Ovary (tissue), 10 donors: ENCODE measurements at regions of chr12 and their contacts with region 1.

Region 1: DNA sequence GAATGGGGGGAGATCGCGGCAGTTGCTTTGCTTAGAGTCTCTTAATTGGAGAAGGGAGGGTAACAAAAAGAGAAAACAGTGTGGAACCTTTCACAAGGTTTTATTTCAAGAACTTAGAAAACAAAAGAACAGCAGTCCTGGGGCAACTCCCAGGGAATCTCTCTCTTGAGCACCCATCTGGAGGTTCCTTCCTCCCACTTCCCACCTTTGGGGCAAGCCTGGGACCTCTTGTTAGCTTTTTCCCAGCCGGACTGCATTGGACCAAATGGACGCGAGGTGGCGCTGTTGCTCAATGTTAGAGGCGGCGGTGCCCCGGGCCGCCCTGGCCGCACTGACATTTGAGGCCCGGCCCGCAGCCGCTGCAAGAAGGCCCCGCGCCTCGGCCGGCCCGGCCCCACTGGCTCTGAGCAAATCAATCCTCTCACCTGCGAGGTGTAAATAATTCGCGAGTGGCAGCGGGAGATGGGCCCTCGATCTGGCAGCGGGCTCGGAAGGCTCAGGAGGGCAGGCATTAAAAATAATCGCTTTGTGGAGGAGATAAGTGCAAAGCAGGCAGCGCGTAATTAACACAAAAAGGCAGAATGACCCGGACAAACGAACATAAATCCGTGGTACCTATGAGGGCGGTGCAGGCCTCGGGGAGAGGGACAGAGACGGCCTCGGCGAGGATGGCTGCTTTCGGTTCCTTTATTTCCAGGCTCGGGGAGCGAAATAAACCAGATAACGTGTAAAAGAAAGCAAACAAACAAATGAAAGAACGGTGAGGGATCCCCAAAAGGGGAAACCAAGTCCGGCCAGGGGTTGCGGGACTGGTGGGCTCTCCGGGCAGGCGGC is 2.7 kb upstream of the HOXC8 start:
- DNase-seq: peak; percentile 85 to 95 (median 93)
- H3K4me3 ChIP-seq: peak overlapping the region; percentile 14
- H3K27ac ChIP-seq: peak overlapping the region in 1 of 2 donors; percentile 13
- H3K4me1 ChIP-seq: peaks cover 2% of the 10 kb centered on the region
- H3K27me3 ChIP-seq: no peaks in the 10 kb centered on the region
- CTCF ChIP-seq: peak; percentile 95 to 97 (median 96)
- EP300 ChIP-seq: no peak
- POLR2A ChIP-seq: no peak

Region 2: DNA sequence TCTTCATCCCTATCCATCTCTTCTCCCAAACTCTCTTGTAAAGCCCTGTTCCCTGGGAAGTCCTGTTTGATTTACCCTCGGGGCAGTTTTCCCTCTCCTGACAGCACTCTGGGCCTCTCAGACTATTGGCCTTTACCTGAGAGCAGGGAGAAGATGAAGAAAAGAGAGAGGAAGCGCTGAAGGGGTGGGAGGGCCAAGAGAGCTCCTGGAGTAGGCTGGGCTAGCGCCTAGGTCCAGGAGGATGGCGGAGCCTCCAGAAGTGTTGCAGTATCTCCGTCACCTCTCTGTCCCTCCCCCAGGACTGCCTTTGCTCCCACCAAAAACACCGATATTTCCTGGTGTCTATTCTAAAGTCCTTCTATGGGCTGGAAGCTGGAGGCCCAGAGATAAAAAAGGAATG is 914.3 kb before region 1 on chr12:
- intact Hi-C with region 1: no loop called
- DNase-seq: peak in 1 of 5 donors; percentile 7
- H3K4me3 ChIP-seq: no peak overlapping the region
- H3K27ac ChIP-seq: no peak overlapping the region
- H3K4me1 ChIP-seq: peaks cover 8% of the 10 kb centered on the region
- H3K27me3 ChIP-seq: no peaks in the 10 kb centered on the region
- CTCF ChIP-seq: no peak
- EP300 ChIP-seq: no peak
- POLR2A ChIP-seq: no peak

Region 3: DNA sequence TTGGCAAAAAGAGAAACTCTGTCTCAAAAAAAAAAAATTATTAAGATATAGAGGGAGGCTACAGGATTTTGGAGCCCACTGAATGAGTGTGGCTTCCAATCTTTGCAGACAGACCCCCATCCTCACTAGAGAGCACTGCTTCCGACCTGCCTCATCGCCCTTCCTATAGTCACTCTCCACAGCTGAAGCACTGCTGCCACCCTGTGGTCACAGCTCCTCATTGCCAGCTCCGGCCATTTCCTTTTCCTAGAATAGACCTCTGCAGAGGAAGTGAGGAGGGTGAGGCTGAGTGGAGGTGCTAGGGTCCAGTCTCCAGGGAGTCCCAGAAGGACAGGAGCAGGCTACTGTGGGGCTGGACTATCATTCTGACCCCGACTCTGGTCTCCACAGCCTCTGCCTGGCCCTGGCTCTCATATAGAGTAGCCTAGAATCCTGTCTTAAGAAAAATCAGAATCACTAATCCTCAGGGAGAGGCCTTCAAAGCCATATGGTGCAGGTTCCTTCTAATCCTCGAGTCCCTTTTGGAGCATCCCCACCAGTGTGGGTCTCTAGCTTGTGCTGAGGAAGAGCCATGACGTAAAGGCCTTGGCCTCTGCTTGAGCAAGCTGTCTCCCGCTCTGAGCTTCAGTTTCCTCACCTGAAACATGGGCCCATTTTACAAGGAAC is 497.4 kb before region 1 on chr12:
- intact Hi-C with region 1: no loop called
- DNase-seq: peak; percentile 76 to 90 (median 87)
- H3K4me3 ChIP-seq: no peak overlapping the region
- H3K27ac ChIP-seq: peak overlapping the region in 1 of 2 donors; percentile 7
- H3K4me1 ChIP-seq: no peaks in the 10 kb centered on the region
- H3K27me3 ChIP-seq: no peaks in the 10 kb centered on the region
- CTCF ChIP-seq: peak; percentile 79 to 87 (median 83)
- EP300 ChIP-seq: no peak
- POLR2A ChIP-seq: no peak

Region 4: DNA sequence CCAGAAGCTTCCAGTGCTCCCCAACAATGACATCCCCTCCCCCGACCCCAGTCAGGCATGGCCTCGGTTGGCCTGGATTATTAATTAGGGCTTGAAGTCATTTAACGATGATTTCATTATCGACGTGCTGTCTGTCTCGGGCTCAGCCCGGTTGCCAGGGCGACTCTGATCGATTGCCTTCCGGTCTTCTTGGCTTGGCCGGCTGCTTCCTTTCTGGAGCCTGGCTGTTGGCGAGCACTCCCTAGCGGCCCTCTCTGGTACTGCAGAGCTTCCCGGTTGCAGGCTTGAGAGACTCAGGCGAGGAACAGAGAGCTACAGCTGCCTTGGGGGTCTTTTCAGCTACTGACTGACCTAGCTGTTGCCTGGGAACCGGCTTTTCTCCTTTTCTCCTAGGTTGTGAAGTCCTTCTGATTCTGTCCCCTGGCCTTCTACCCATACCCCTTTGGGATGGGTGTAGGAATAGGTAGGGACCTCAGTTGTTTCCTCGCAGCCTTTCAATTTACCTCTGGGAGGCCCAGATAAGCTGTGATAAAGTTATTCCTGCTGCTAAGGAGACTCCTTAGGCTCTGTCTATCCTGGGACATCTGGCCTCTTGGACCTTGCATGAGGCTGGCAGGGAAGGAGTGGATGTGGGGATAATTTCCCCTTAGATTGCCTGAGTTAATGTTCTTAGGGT is 248.8 kb before region 1 on chr12:
- intact Hi-C with region 1: no loop called
- DNase-seq: peak; percentile 50 to 81 (median 74)
- H3K4me3 ChIP-seq: no peak overlapping the region
- H3K27ac ChIP-seq: no peak overlapping the region
- H3K4me1 ChIP-seq: peaks cover 2% of the 10 kb centered on the region
- H3K27me3 ChIP-seq: no peaks in the 10 kb centered on the region
- CTCF ChIP-seq: peak; percentile 37 to 50 (median 44)
- EP300 ChIP-seq: no peak
- POLR2A ChIP-seq: no peak

Region 5: DNA sequence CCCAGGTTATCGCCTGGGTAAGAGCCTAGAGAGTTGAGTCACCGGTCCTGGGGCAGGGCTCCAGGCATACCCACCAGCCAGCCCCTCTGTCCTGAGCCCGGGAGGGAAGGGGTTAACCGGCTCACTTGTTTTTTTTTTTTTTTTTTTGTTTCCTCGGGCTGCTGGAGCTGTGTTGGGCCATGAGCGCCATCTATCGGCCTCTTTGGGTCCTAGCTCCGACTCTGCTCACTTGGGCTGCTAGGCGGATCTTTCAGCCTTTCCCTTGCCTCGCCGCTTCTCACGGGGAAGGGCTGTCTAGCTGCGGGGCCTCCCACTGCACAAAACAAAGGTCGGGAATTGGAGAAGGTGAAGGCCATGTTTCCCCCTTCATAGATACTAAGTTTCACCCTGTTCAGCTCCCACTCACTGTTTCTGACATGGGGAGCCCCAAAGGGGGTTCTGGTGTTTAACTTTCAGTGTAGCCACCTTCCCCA is 185.5 kb after region 1 on chr12:
- intact Hi-C with region 1: loop called in 3 of 4 experiments (anchors 2 to 5 kb)
- DNase-seq: peak; percentile 82 to 88 (median 88)
- H3K4me3 ChIP-seq: no peak overlapping the region
- H3K27ac ChIP-seq: no peak overlapping the region
- H3K4me1 ChIP-seq: no peaks in the 10 kb centered on the region
- H3K27me3 ChIP-seq: no peaks in the 10 kb centered on the region
- CTCF ChIP-seq: peak; percentile 75 to 85 (median 82)
- EP300 ChIP-seq: no peak
- POLR2A ChIP-seq: no peak

Region 6: GRCh38 chr12:54201001-54201794 is 195.1 kb after region 1 on chr12:
- intact Hi-C with region 1: loop called (anchors 2 to 5 kb)
- DNase-seq: peak; percentile 58 to 79 (median 68)
- H3K4me3 ChIP-seq: no peak overlapping the region
- H3K27ac ChIP-seq: no peak overlapping the region
- H3K4me1 ChIP-seq: no peaks in the 10 kb centered on the region
- H3K27me3 ChIP-seq: no peaks in the 10 kb centered on the region
- CTCF ChIP-seq: peak; percentile 89 to 95 (median 94)
- EP300 ChIP-seq: no peak
- POLR2A ChIP-seq: no peak

Region 7: GRCh38 chr12:54368709-54369583 is 362.9 kb after region 1 on chr12:
- intact Hi-C with region 1: loop called in 3 of 4 experiments (anchors 10 kb)
- DNase-seq: peak; percentile 90 to 94 (median 94)
- H3K4me3 ChIP-seq: peak overlapping the region; percentile 42
- H3K27ac ChIP-seq: peak overlapping the region; percentile 67 to 76
- H3K4me1 ChIP-seq: peaks cover 12% of the 10 kb centered on the region
- H3K27me3 ChIP-seq: no peaks in the 10 kb centered on the region
- CTCF ChIP-seq: peak; percentile 42 to 89 (median 86)
- EP300 ChIP-seq: no peak
- POLR2A ChIP-seq: no peak

Region 8: DNA sequence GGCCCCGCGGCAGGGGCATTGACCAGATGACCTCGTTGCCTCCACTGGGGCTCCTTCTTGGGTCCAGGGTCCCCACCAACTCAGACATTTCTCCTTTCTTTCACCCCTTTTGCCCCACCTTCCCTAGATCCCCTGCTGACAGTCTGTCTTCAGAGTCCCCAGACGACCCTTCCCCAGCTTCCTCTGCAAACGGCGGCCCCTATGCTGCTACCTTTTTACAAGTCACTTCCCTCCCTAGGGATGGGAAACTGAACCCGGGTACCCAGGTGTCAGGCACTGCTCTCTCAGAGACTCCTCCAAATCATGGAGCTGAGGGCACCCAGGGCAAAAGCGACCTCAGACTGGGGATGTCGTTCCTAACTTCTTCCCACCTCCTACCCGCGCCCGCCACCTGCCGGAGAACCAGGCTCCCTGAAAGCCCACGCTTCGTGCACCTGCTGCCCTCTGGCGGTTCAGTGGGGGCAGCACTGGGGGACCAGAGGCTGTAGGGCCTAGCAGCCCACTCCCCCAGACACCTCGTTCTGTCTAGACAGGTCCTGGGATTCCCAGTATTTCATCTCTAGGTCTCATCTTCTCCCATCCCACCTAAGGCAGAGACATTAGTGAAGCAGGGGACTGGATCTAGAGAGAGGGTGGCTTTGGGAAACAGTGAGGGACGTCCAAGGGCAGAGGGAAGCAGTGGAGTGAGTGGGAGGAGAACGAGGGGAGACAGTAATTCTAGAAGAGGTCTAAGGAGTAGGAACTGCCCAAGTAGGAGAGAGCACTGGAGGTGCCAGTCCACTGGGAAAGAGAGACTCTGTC is 373.5 kb after region 1 on chr12:
- intact Hi-C with region 1: loop called in 1 of 4 experiments (anchors 10 kb)
- DNase-seq: peak; percentile 90 to 95 (median 93)
- H3K4me3 ChIP-seq: peak overlapping the region; percentile 37
- H3K27ac ChIP-seq: no peak overlapping the region
- H3K4me1 ChIP-seq: peaks cover 3% of the 10 kb centered on the region
- H3K27me3 ChIP-seq: no peaks in the 10 kb centered on the region
- CTCF ChIP-seq: peak; percentile 99 to 100 (median 100)
- EP300 ChIP-seq: no peak
- POLR2A ChIP-seq: no peak